Activated CD4-positive, alpha-beta T cell treated with anti-CD3 and anti-CD28 coated beads for 36 hours (primary cell): ENCODE measurements at regions of chr6 and their contacts with region 1.

Region 1: DNA sequence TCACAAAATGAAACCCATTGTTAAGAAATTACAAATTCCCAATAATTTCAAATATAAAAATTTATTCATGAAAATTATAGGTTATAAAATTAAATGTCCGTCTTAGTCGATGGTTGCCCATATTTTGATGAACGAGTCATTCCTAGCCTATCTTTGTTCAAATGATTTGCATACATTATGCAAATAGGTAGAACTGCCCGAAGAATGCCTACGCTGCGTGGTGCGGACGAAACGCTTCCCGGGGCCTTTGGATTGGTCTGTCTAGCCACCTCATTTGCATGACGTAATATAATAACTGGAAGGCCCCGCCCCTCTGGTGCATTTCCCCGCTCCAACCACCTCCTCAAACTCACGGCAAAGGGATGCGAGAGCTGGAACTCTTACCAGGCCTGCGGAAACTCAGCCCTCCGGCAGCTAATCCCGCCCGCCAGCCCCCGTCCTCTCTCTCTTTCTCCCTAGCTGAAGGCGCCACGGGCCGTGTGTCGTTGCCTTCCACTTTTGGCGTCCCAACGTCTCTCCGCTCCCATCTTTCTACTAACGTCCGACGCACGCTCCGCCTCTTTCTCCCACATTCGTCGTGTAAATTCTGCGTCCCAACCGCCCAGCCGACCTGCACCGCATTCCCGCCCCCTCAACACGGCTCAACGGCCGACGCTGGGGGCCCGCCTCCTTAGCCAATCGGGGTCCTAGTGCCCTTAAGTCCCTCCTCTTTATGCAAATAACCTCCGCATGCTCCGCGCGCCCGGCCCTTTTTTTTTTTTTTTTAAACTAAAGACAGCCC is 520 bp upstream of the PRRC2A start:
- DNase-seq: peak; percentile 98
- ATAC-seq: peak; percentile 82
- H3K4me3 Mint-ChIP-seq: peak overlapping the region; percentile 95
- H3K27ac Mint-ChIP-seq: peak overlapping the region; percentile 97
- H3K4me1 Mint-ChIP-seq: peaks cover 52% of the 10 kb centered on the region
- H3K27me3 Mint-ChIP-seq: no peaks in the 10 kb centered on the region

Region 2: GRCh38 chr6:31474871-31475286 is 145.1 kb before region 1 on chr6:
- CTCF ChIA-PET with region 1: no interaction called
- POLR2A ChIA-PET with region 1: no interaction called
- intact Hi-C with region 1: no loop called
- DNase-seq: peak; percentile 56
- ATAC-seq: peak; percentile 29
- H3K4me3 Mint-ChIP-seq: no peak overlapping the region
- H3K27ac Mint-ChIP-seq: no peak overlapping the region
- H3K4me1 Mint-ChIP-seq: peaks cover 49% of the 10 kb centered on the region
- H3K27me3 Mint-ChIP-seq: no peaks in the 10 kb centered on the region

Region 3: DNA sequence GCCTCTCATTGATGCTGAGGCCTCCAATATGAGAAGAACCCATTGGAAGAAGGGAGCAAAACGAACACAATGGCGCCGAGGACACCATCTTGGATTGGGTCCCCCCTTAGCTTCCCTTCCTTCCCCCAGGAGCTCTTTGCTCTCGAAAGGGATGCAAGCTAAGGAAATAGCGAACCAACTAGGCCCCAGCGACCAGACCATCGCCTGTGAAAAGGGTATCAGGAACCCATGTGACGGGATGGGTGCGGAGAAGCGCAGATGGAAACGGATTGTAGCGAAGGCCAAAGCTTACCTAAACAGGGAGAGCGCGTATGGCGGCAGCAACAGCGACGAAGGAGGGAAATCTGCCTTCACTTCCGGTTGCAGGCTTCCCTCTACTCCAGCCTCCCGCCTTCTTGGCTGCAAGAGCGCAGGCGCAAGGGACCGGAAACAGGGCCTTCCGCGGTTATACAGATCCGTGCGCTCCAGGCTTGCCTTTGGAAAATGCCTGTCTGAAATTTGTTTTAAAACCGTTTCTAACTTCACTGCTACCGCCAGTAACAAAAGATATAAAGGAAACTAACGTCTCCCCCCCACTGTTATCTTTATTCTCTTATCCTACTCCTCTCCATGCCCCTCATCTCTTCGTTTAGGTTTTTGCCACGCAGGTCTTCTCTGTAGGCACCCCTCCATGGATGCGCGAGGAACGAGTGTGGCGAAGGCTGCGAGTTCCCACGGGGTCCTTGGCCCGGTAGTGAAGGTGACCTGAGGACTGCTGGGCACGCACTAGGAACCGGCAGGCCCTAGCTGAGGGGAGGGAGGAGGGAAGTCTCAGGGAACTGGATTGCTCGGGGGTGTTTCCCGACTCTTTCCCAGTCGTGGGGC is 78.1 kb before region 1 on chr6 and contains the start of gene DDX39B:
- CTCF ChIA-PET with region 1: interaction called, 4 read pairs
- POLR2A ChIA-PET with region 1: interaction called, 8 read pairs
- intact Hi-C with region 1: loop called (anchors 1 to 2 kb)
- DNase-seq: peak; percentile 96
- ATAC-seq: peak; percentile 77
- H3K4me3 Mint-ChIP-seq: peak within 1 kb of the TSS; percentile 79
- H3K27ac Mint-ChIP-seq: peak within 1 kb of the TSS; percentile 92
- H3K4me1 Mint-ChIP-seq: peaks cover 50% of the 10 kb centered on the region
- H3K27me3 Mint-ChIP-seq: no peaks in the 10 kb centered on the region
- total RNA-seq, gene DDX39B: 517 to 569 TPM

Region 4: DNA sequence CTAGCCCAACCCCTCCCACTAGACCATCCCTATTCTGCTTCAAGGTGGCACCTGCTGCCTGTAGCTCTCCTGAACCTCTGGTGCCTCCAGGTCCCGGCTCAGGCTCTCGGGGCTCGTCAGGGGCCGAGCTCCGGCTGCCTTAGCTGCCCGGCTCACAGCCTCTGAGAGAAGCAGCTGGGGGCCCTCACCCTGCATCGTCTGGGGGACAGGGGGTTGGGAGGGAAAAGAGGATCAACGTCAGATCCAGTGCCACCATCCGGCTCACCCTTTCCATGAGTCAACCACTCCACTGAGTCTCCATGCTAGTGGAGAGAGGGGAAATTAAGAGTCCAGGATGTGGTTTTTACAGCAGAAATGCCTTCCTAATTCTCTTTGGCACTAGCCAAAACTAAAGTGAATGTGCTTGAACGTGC is 19.5 kb after region 1 on chr6:
- CTCF ChIA-PET with region 1: interaction called, 8 read pairs
- POLR2A ChIA-PET with region 1: interaction called, 11 read pairs
- intact Hi-C with region 1: no loop called
- DNase-seq: peak; percentile 61
- ATAC-seq: peak; percentile 46
- H3K4me3 Mint-ChIP-seq: no peak overlapping the region
- H3K27ac Mint-ChIP-seq: peak overlapping the region; percentile 86
- H3K4me1 Mint-ChIP-seq: peaks cover 7% of the 10 kb centered on the region
- H3K27me3 Mint-ChIP-seq: no peaks in the 10 kb centered on the region

Region 5: DNA sequence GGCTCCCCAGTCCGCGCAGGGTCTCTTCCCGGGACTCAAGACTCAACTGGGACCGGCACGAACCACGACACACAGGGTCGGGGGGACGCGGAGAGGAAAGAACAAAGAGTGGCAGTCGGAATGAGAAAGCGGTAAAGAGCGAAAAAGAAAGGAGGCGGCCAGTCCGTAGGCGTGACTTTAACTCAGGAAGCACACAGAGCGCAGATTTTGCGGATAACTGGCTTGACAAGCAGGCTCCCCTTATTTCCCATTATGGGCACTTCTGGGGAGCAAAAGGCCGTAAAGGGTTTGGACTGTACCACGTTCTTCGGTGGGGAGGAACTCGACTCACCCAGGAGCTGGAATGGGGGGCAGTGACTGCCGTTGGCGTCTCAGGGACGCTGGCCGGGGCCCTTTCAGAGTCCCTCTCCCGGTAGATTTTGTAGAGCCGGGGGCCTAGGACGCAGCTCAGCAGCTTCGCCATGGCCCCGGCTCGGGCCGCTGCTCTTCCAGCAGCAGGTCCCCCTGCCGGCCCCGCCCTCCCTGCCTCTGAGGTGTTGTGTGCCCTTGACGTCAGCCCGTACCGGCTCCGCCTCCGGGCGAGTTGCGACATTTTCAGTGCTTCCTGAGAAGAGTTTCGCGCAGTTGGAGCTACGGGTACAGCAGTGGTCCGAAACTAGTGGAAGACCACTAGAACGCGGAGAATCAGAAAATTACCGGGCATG is 83.0 kb after region 1 on chr6 and contains the start of gene ABHD16A:
- CTCF ChIA-PET with region 1: no interaction called
- POLR2A ChIA-PET with region 1: no interaction called
- intact Hi-C with region 1: loop called in 1 of 2 experiments (anchors 1 kb)
- DNase-seq: peak; percentile 99
- ATAC-seq: peak; percentile 91
- H3K4me3 Mint-ChIP-seq: peak within 1 kb of the TSS; percentile 99
- H3K27ac Mint-ChIP-seq: peak within 1 kb of the TSS; percentile 97
- H3K4me1 Mint-ChIP-seq: peaks cover 24% of the 10 kb centered on the region
- H3K27me3 Mint-ChIP-seq: no peaks in the 10 kb centered on the region
- total RNA-seq, gene ABHD16A: 20.9 to 25.1 TPM

Region 6: DNA sequence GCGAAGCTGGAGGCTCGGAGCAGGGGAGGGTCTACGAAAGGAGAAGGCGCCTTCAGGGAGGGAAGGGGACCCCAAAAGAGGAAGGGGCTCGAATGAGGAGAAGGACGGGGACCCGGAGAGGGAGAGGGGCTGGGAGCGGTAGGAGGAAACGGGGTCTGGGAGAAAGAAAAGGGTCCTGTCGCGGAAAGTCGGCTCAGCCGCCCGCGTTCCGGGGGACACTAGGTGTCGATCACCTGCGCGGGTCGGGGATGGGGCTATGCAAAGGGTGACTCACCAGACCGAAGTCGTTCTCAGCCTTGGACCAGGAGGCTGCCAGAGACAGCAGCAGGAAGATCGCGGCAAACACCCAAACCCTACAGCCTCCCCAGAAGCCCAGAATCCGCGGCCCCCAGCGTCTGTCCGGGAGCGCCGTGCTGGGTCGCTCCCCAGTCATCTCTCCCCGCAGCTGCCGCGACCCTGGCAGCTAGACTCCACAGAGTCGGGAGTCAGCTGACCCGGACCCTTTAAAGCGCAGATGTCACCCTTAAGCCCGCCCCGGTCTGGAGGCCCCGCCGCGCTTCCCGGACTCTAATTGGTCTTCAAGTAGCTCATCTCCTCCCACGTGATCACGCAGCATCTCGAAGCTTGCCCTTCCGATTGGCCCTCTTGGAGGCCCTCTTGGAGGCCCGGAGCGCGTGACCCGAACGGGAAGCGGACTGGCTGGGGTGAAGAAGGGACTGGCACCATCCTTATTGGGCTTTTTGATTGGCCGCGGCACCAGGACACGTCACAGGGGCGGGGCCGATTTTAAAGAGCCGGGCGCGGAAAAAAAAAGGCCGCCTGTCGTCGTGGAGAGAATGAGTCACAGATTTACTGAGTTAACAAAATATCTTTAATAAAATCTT is 242.6 kb after region 1 on chr6 and contains the start of gene NEU1:
- CTCF ChIA-PET with region 1: interaction called, 5 read pairs
- POLR2A ChIA-PET with region 1: interaction called, 3 read pairs
- intact Hi-C with region 1: loop called in 1 of 2 experiments (anchors 1 kb)
- DNase-seq: peak; percentile 100
- ATAC-seq: peak; percentile 98
- H3K4me3 Mint-ChIP-seq: peak within 1 kb of the TSS; percentile 90
- H3K27ac Mint-ChIP-seq: peak within 1 kb of the TSS; percentile 91
- H3K4me1 Mint-ChIP-seq: peaks cover 27% of the 10 kb centered on the region
- H3K27me3 Mint-ChIP-seq: no peaks in the 10 kb centered on the region
- total RNA-seq, gene NEU1: 11.6 to 11.8 TPM

Region 7: DNA sequence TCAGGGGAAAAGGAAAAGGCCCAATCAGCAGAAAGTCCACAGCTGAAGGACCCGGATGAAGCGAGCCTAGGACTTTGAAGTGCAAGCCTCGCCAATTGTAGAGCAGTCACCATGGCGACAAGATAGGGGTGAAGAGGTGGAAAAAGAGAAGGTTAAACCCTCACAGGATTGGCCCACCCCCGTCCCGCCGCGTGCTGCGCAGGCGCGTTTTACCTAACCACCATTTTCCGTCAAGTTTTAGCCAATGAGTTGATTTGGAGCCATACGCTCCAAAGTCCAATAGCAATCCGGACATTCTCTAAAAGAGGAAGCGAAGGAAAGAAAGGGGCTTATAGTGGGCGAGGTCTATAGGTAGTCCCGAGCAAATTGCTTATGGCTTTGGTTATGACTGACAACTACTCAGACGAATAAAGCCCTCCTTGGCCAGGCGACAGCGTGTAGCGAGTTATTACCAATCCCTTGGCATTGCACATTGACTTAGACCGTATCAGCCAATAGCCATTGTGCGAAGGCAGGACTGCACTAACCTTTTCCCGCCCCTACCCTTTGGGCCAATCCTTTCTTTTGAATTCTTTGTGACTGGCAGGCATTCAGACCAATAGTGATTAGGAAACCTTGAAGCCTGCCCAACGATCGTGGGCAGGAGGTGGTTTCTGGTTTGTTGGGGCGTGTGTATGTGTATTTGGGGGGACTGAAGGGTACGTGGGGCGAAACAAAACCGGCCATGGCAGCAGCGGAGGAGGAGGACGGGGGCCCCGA is 558.0 kb after region 1 on chr6 and contains the start of gene RNF5:
- CTCF ChIA-PET with region 1: no interaction called
- POLR2A ChIA-PET with region 1: no interaction called
- intact Hi-C with region 1: loop called in 1 of 2 experiments (anchors 2 kb)
- DNase-seq: peak; percentile 96
- ATAC-seq: peak; percentile 89
- H3K4me3 Mint-ChIP-seq: peak within 1 kb of the TSS; percentile 92
- H3K27ac Mint-ChIP-seq: peak within 1 kb of the TSS; percentile 98
- H3K4me1 Mint-ChIP-seq: peaks cover 70% of the 10 kb centered on the region
- H3K27me3 Mint-ChIP-seq: no peaks in the 10 kb centered on the region
- total RNA-seq, gene RNF5: 51.7 to 65.6 TPM